ENCODE measurements at regions of chr1 and their contacts with region 1.

Region 1: DNA sequence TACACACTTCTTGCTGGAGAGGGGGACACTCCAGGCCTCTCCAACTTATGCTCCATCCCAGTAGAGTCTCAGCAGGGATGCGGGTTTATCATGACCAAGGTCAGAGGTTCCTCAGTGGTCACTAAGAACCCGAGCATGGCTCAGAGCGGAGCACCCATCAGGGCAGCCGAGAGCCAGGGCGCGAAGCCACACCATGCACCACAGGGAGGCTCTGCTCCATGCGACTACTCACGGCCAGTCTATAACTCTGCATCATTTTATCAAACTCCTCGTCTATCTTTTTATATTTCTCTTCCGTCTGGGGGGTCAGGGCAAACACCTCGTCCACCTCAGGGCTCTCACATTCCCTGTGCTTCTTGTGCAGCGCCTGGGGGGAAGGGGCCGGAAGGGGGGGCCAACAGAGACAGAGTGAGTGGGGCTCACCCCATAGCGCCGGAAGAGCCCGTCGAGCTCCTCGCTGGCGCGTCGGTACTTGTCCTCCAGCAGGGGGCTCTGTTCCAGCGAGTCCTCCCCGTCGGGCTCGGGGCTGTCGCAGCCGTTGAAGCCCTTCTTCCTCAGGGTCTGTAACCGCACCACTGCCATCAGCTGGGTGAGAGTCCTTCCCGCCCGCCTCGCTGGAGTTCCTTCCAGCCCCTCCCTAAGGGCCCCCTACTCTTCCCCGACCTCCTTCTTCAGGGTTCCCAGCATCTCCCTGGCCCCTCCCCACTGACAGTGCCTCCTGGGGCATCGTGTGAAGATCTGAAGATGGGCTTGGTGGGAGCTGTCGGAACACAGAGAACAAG is 20.0 kb downstream of the MEF2D start:
- DNase-seq: peak; percentile 83
- ATAC-seq: peak; percentile 91
- H3K4me3 Mint-ChIP-seq: peak overlapping the region; percentile 20
- H3K27ac Mint-ChIP-seq: peak overlapping the region; percentile 79
- H3K4me1 Mint-ChIP-seq: peaks cover 58% of the 10 kb centered on the region
- H3K27me3 Mint-ChIP-seq: no peaks in the 10 kb centered on the region
- CTCF ChIP-seq: peak; percentile 73

Region 2: DNA sequence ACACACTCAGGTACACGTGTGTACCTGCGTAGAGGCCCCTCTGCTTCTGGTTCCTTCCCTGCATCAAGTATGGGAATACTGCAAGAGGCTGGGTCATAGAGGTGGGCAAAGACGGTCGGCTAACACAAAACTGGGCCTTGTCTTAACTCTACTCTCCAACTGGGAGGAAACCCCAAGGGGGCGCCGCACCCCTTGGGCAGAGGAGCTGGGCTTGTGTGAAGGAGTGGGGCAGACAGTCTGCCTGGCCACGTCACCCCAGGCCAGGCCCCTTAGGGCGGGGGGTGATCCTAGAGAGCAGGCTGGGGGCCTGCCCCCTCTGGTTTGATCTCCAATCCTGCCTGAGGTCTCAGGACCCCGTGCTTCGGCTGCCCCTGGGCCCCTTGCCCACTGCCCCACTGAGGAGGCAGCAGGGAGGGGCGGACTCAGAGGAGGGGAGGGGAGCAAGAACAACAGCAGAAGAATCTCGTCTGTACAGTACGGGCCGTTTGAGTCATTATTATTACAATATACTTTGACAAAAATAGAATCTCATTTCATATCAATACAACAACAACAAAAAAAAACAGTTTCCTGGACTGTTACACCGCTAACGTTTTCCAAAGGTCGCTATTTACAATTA is 14.7 kb before region 1 on chr1:
- CTCF ChIA-PET with region 1: interaction called, 22 read pairs
- POLR2A ChIA-PET with region 1: interaction called, 7 read pairs
- intact Hi-C with region 1: no loop called
- DNase-seq: peak; percentile 42
- ATAC-seq: peak; percentile 28
- H3K4me3 Mint-ChIP-seq: no peak overlapping the region
- H3K27ac Mint-ChIP-seq: peak overlapping the region; percentile 13
- H3K4me1 Mint-ChIP-seq: peaks cover 11% of the 10 kb centered on the region
- H3K27me3 Mint-ChIP-seq: no peaks in the 10 kb centered on the region
- CTCF ChIP-seq: no peak

Region 3: DNA sequence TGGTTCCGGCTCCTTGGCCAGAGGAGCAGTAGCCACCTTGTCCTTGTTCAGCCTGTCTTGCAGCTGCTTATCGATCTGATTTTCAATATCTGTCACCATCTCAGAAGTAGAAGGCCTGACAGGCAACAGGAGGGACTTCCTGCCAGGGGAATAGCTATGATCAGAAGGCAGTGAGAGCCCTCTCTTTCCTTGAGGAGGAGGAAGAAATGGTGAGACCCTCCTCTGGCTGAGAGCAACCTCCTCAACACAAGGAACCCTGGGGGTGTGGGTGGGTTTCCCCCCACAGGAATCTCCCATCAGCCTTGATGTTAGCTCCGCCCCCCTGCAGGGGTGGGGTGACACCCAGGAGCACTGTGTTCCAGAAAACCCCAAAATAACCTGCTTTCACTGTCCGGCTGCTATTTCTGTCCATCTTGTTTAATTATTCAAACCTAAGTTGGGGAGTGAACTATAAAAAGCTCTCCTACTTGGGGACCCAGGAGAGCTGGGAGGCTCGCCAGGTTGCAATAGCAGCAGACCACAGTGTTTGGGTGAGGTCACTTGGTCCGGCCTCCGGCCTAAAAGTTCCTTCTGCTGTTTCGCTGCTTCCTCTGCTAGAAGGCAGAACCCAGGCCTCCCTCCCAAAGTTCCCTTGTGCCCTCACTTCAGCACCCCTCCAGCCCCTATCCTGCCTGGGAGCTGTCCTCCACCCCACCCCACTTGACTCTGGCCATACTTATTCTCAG is 27.7 kb after region 1 on chr1:
- CTCF ChIA-PET with region 1: interaction called, 220 read pairs
- POLR2A ChIA-PET with region 1: interaction called, 245 read pairs
- intact Hi-C with region 1: no loop called
- DNase-seq: peak; percentile 57
- ATAC-seq: no peak
- H3K4me3 Mint-ChIP-seq: peak overlapping the region; percentile 75
- H3K27ac Mint-ChIP-seq: peak overlapping the region; percentile 84
- H3K4me1 Mint-ChIP-seq: peaks cover 56% of the 10 kb centered on the region
- H3K27me3 Mint-ChIP-seq: no peaks in the 10 kb centered on the region
- CTCF ChIP-seq: no peak

Region 4: GRCh38 chr1:156524481-156524869 is 43.9 kb after region 1 on chr1:
- CTCF ChIA-PET with region 1: interaction called, 35 read pairs
- POLR2A ChIA-PET with region 1: interaction called, 7 read pairs
- intact Hi-C with region 1: no loop called
- DNase-seq: peak; percentile 70
- ATAC-seq: peak; percentile 93
- H3K4me3 Mint-ChIP-seq: peak overlapping the region; percentile 40
- H3K27ac Mint-ChIP-seq: peak overlapping the region; percentile 75
- H3K4me1 Mint-ChIP-seq: peaks cover 43% of the 10 kb centered on the region
- H3K27me3 Mint-ChIP-seq: no peaks in the 10 kb centered on the region
- CTCF ChIP-seq: no peak

Region 5: GRCh38 chr1:156591432-156592157 is 111.0 kb after region 1 on chr1 and contains the start of gene NAXE:
- CTCF ChIA-PET with region 1: interaction called, 10 read pairs
- POLR2A ChIA-PET with region 1: interaction called, 15 read pairs
- intact Hi-C with region 1: no loop called
- DNase-seq: peak; percentile 73
- ATAC-seq: peak; percentile 92
- H3K4me3 Mint-ChIP-seq: peak within 1 kb of the TSS; percentile 77
- H3K27ac Mint-ChIP-seq: peak within 1 kb of the TSS; percentile 87
- H3K4me1 Mint-ChIP-seq: peaks cover 30% of the 10 kb centered on the region
- H3K27me3 Mint-ChIP-seq: no peaks in the 10 kb centered on the region
- CTCF ChIP-seq: no peak
- total RNA-seq, gene NAXE: 65.4 to 68.6 TPM

Region 6: DNA sequence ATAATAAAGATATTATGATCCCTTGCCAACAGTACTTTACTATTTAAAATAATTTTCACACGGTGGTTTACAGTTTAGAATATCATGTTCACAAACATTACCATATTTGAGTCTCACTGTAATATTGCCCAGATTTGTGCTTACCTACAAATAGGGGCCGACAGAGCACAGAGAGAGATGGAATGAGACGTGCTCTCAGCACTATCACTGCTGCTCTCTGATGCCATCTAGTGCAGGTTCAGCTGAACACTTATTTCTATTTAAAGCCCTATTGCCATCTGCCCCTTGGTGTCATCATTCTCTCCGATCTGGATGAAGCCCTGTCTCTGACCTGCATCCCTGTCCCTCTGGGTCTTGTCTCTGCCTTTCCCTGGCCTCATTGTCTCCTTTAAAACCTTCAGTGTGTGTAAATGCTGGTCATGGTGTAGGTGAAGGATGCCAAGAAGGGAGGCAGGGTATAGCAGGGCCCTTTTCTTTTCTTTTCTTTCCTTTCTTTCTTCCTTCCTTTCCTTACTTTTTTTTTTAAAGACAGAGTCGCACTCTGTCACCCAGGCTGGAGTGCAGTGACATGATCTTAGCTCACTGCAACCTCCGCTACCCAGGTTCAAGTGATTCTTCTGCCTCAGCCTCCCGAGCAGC is 127.6 kb after region 1 on chr1:
- CTCF ChIA-PET with region 1: interaction called, 36 read pairs
- POLR2A ChIA-PET with region 1: no interaction called
- intact Hi-C with region 1: loop called (anchors 1 kb)
- DNase-seq: peak; percentile 77
- ATAC-seq: peak; percentile 98
- H3K4me3 Mint-ChIP-seq: no peak overlapping the region
- H3K27ac Mint-ChIP-seq: peak overlapping the region; percentile 50
- H3K4me1 Mint-ChIP-seq: peaks cover 8% of the 10 kb centered on the region
- H3K27me3 Mint-ChIP-seq: peaks cover 3% of the 10 kb centered on the region
- CTCF ChIP-seq: peak; percentile 86

Region 7: DNA sequence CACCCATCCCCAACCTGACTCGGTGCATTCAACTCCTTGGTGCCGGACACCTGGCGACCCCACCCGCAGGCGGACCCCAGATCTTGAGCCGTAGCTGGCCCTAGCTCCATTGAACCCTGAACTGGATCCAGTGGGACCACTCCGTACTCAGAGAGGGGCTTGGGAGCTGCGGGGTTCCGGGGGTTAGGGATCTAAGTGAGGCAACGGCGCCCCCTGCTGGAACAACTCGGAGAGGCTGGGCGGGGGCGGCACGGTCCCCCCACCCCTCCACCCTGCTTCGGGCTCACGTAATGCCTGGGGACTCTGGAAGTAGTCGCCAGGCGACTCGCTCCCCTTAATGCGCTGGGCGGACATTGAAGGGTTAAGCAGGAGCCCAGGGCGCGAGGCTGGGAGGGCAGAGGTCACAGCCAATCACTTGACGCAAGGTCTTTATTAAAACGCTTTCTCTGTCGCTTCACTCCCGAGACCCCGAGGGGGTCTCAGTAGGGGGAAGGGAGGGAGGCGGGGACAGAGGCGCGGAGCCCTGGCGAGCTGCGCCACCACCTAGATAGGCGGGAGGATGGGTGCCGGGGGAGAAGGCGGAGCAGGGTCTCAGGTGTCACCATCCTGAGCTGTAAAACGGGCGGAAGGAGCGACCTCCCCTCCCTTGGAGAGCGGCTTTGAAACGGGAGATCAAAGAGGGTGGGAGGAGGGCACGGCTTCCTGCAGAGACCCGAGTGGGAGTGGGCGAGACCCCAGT is 225.5 kb after region 1 on chr1:
- CTCF ChIA-PET with region 1: no interaction called
- POLR2A ChIA-PET with region 1: no interaction called
- intact Hi-C with region 1: no loop called
- DNase-seq: peak; percentile 87
- ATAC-seq: peak; percentile 67
- H3K4me3 Mint-ChIP-seq: peak overlapping the region; percentile 75
- H3K27ac Mint-ChIP-seq: peak overlapping the region; percentile 75
- H3K4me1 Mint-ChIP-seq: peaks cover 34% of the 10 kb centered on the region
- H3K27me3 Mint-ChIP-seq: peaks cover 19% of the 10 kb centered on the region
- CTCF ChIP-seq: peak; percentile 99

Measured in activated CD8-positive, alpha-beta T cell treated with anti-CD3 and anti-CD28 coated beads for 36 hours (primary cell).